ENCODE measurements at regions of chrX and their contacts with region 1.

Region 1: GRCh38 chrX:101415180-101416145 is 7.4 kb downstream of the HNRNPH2 start:
- DNase-seq: peak in 2 of 5 donors; percentile 16 to 19
- ATAC-seq: peak in 3 of 4 donors; percentile 29 to 34 (median 34)
- H3K4me3 ChIP-seq: no peak overlapping the region
- H3K27ac ChIP-seq: peak overlapping the region in 10 of 12 donors; percentile 17 to 77 (median 60)
- H3K4me1 ChIP-seq: peaks cover 0 to 43% (median 12%) of the 10 kb centered on the region in 12 donors
- H3K27me3 ChIP-seq: peaks cover 0 to 29% (median 0%) of the 10 kb centered on the region in 9 donors
- CTCF ChIP-seq: peak; percentile 49 to 85 (median 69)
- POLR2A ChIP-seq: no peak

Region 2: DNA sequence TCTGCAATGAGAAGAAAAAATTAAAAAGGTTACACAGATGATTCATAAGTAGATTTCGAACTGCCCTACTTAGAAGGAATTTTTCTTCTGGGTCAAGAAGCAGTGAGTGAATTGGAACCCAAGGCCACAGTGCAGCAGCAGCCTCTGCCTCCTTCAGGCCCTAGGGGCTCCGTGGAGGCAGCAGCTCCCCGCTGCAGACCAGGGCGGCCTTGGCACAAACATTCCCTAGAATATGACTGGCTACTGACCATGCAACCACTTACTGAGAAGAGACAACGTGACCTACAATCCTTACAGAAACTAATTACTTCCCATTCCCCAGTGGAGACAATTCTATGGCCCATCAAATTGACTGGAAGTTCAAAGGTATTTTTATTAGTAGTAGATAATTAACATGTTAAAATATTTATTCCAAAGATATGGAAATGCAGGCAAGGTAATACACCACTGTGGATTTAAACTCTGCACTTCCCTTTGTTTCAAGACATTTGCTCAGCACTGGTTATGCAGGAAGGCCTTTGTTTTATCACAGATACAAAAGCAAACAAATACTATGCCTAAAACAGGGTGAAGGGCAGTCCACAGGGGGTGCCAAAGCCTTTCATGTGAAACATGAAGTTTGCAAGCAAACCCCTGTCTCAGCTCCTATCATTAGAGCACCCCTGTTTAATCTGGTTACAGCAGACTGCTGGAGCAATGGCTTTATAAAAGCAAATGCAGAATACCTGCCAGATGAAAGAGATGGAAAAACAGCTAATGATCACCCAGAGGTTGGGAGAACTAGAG is 1064.6 kb before region 1 on chrX:
- intact Hi-C with region 1: no loop called
- DNase-seq: no peak
- ATAC-seq: no peak
- H3K4me3 ChIP-seq: no peak overlapping the region
- H3K27ac ChIP-seq: no peak overlapping the region
- H3K4me1 ChIP-seq: no peaks in the 10 kb centered on the region
- H3K27me3 ChIP-seq: peaks cover 0 to 8% (median 0%) of the 10 kb centered on the region in 9 donors
- CTCF ChIP-seq: no peak
- POLR2A ChIP-seq: no peak

Region 3: GRCh38 chrX:101550362-101550750 is 134.9 kb after region 1 on chrX and contains the start of gene ARMCX1:
- intact Hi-C with region 1: loop called in 6 of 10 experiments (anchors 5 to 10 kb)
- DNase-seq: peak; percentile 74 to 87 (median 79)
- ATAC-seq: peak; percentile 94 to 98 (median 96)
- H3K4me3 ChIP-seq: peak within 1 kb of the TSS; percentile 30 to 80 (median 68)
- H3K27ac ChIP-seq: peak within 1 kb of the TSS; percentile 51 to 94 (median 86)
- H3K4me1 ChIP-seq: peaks cover 0 to 4% (median 0%) of the 10 kb centered on the region in 12 donors
- H3K27me3 ChIP-seq: no peaks in the 10 kb centered on the region
- CTCF ChIP-seq: no peak
- POLR2A ChIP-seq: peak in 1 of 2 donors; percentile 55
- total RNA-seq, gene ARMCX1: 25.6 to 50.4 (median 32.9) TPM

Region 4: GRCh38 chrX:101605146-101605545 is 189.7 kb after region 1 on chrX:
- intact Hi-C with region 1: no loop called
- DNase-seq: no peak
- ATAC-seq: no peak
- H3K4me3 ChIP-seq: no peak overlapping the region
- H3K27ac ChIP-seq: no peak overlapping the region
- H3K4me1 ChIP-seq: no peaks in the 10 kb centered on the region
- H3K27me3 ChIP-seq: peaks cover 0 to 22% (median 0%) of the 10 kb centered on the region in 9 donors
- CTCF ChIP-seq: no peak
- POLR2A ChIP-seq: no peak